PC-9 (cell line): ENCODE measurements at regions of chr20 and their contacts with region 1.

Region 1: DNA sequence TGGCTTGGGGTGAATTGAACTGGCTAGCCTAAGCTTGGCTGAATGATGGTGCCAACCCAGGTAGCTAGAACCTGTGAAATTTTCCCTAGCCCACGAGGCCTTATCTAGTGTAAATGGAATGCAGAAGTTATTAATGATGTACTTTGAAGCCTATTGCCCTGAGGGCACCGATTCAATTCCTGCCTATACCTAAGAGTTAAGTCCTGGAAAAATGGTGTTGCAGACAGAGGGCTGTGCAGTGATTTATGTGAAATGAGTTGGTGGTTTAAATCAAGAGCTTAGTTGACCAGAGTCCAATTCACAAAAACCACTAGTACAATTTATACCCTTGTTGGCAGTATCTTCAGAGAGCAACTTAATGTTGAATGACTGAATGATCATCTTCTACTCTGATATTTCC is 373.8 kb upstream of the JAG1 start:
- DNase-seq: peak; percentile 15 to 65
- H3K4me3 ChIP-seq: no peak overlapping the region
- H3K27ac ChIP-seq: no peak overlapping the region
- H3K4me1 ChIP-seq: peaks cover 10% of the 10 kb centered on the region; the same call in 1 of the 2 replicates
- H3K27me3 ChIP-seq: no peaks in the 10 kb centered on the region
- CTCF ChIP-seq: no peak

Region 2: GRCh38 chr20:10659651-10660601 is 387.6 kb before region 1 on chr20:
- CTCF ChIA-PET with region 1: no interaction called
- POLR2A ChIA-PET with region 1: interaction called, 32 read pairs
- intact Hi-C with region 1: no loop called
- DNase-seq: no peak
- H3K4me3 ChIP-seq: no peak overlapping the region
- H3K27ac ChIP-seq: no peak overlapping the region
- H3K4me1 ChIP-seq: no peaks in the 10 kb centered on the region
- H3K27me3 ChIP-seq: no peaks in the 10 kb centered on the region
- CTCF ChIP-seq: no peak

Region 3: DNA sequence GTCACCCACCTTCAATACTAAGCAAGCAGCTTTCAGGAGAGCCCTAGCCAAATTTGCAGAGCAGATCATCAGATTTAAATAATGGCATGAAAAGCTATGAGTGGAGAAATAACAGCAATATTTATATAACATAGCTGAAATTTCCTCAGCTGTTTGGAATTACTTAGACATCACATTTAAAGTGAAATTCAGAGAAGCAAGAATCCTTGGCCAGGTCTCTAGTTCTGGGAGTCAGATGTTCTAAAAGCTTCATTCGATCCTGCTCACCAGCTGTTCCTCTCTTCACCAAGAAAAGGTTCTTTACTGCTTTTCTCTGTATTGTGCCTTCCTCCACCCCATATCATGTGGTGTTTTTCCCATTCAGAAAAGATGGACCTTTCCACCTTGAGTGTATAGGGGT is 221.4 kb before region 1 on chr20:
- CTCF ChIA-PET with region 1: no interaction called
- POLR2A ChIA-PET with region 1: no interaction called
- intact Hi-C with region 1: no loop called
- DNase-seq: no peak
- H3K4me3 ChIP-seq: no peak overlapping the region
- H3K27ac ChIP-seq: no peak overlapping the region
- H3K4me1 ChIP-seq: no peaks in the 10 kb centered on the region
- H3K27me3 ChIP-seq: no peaks in the 10 kb centered on the region
- CTCF ChIP-seq: no peak